ENCODE measurements at regions of chr17 and their contacts with region 1.

Region 1: DNA sequence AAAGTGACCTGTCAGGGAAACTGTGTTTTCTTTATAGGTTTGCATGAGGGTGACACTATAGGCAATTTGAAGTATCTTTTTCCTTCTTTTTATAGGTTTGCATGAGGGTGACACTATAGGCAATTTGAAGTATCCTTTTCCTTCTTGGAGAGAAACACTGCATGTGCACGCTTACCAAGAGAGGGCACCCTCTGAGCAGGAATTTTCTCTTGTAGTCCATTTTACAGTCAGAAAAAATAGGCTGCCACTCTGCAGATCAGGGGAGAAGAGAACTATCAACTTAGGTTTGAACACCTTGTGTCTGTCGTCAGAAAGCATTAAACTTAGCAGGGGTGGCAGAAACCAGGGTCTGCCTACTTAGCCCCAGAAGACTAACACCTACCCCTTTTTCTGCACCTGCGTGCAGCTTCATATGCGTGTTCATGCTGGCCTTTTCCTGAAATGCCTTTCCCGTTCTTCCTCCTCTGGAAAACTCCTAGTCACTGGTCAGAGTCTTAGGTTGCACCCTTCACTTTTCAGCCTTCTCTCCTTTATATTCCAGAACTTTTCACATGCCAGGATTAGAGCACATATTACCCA is 16.4 kb upstream of the SMIM36 start:
- DNase-seq: no peak
- ATAC-seq: no peak
- H3K4me3 Mint-ChIP-seq: no peak overlapping the region
- H3K27ac Mint-ChIP-seq: no peak overlapping the region
- H3K4me1 Mint-ChIP-seq: no peaks in the 10 kb centered on the region
- H3K27me3 Mint-ChIP-seq: peaks cover 5% of the 10 kb centered on the region

Region 2: GRCh38 chr17:55023626-55024025 is 504.0 kb before region 1 on chr17:
- CTCF ChIA-PET with region 1: no interaction called
- POLR2A ChIA-PET with region 1: no interaction called
- DNase-seq: no peak
- ATAC-seq: no peak
- H3K4me3 Mint-ChIP-seq: no peak overlapping the region
- H3K27ac Mint-ChIP-seq: no peak overlapping the region
- H3K4me1 Mint-ChIP-seq: no peaks in the 10 kb centered on the region
- H3K27me3 Mint-ChIP-seq: no peaks in the 10 kb centered on the region

Region 3: GRCh38 chr17:55601874-55602364 is 74.3 kb after region 1 on chr17:
- CTCF ChIA-PET with region 1: interaction called, 77 read pairs
- POLR2A ChIA-PET with region 1: no interaction called
- DNase-seq: peak; percentile 28
- ATAC-seq: peak; percentile 42
- H3K4me3 Mint-ChIP-seq: no peak overlapping the region
- H3K27ac Mint-ChIP-seq: no peak overlapping the region
- H3K4me1 Mint-ChIP-seq: no peaks in the 10 kb centered on the region
- H3K27me3 Mint-ChIP-seq: peaks cover 8% of the 10 kb centered on the region

Region 4: GRCh38 chr17:55641676-55642081 is 114.0 kb after region 1 on chr17:
- CTCF ChIA-PET with region 1: interaction called, 14 read pairs
- POLR2A ChIA-PET with region 1: no interaction called
- DNase-seq: peak; percentile 36
- ATAC-seq: no peak
- H3K4me3 Mint-ChIP-seq: no peak overlapping the region
- H3K27ac Mint-ChIP-seq: no peak overlapping the region
- H3K4me1 Mint-ChIP-seq: peaks cover 9% of the 10 kb centered on the region
- H3K27me3 Mint-ChIP-seq: peaks cover 3% of the 10 kb centered on the region

Region 5: GRCh38 chr17:55717898-55718735 is 190.5 kb after region 1 on chr17:
- CTCF ChIA-PET with region 1: interaction called, 33 read pairs
- POLR2A ChIA-PET with region 1: no interaction called
- DNase-seq: peak; percentile 72
- ATAC-seq: peak; percentile 49
- H3K4me3 Mint-ChIP-seq: no peak overlapping the region
- H3K27ac Mint-ChIP-seq: no peak overlapping the region
- H3K4me1 Mint-ChIP-seq: no peaks in the 10 kb centered on the region
- H3K27me3 Mint-ChIP-seq: peaks cover 17% of the 10 kb centered on the region

Region 6: GRCh38 chr17:55735731-55736405 is 208.2 kb after region 1 on chr17:
- CTCF ChIA-PET with region 1: interaction called, 17 read pairs
- POLR2A ChIA-PET with region 1: no interaction called
- DNase-seq: peak; percentile 61
- ATAC-seq: peak; percentile 49
- H3K4me3 Mint-ChIP-seq: no peak overlapping the region
- H3K27ac Mint-ChIP-seq: no peak overlapping the region
- H3K4me1 Mint-ChIP-seq: peaks cover 4% of the 10 kb centered on the region
- H3K27me3 Mint-ChIP-seq: peaks cover 13% of the 10 kb centered on the region

Region 7: DNA sequence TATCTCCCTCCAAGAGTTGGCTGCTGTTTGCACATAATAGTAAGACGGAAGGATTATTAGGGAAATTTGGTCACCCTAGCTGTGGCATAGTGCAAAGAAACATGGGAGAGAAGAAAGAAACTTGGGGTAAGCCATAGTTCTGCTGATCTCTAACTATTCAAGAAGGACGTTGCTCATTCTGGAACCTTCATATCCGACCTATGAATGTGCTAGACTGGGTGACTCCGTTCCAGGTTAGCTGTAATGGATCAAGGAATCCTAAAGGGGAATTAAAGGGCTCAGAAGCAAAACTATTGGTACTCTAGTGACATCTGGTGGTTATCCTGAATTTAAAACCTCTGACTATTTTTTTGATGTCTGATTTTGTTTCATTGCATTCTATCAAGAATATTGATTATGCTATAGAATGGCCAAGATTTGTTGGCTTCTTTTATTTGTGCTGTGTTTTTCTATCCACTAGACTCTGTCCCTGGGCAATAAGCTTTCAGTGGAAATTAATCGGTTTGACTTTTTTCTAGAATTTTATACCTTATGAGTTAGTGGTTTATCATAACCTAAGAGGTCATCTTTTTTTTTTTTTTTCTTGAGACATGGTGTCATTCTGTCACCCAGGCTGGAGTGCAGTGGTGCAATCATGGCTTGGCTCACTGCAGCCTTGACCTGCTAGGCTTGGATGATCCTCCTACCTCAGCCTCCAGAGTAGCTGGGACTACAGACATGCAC is 242.7 kb after region 1 on chr17:
- CTCF ChIA-PET with region 1: interaction called, 21 read pairs
- POLR2A ChIA-PET with region 1: no interaction called
- DNase-seq: no peak
- ATAC-seq: no peak
- H3K4me3 Mint-ChIP-seq: no peak overlapping the region
- H3K27ac Mint-ChIP-seq: no peak overlapping the region
- H3K4me1 Mint-ChIP-seq: no peaks in the 10 kb centered on the region
- H3K27me3 Mint-ChIP-seq: no peaks in the 10 kb centered on the region

Measured in activated CD8-positive, alpha-beta T cell treated with anti-CD3 and anti-CD28 coated beads, Interleukin-2, amount 10 ng/mL, durations not matched to agents 7 days and 5 days (primary cell).